ENCODE measurements at regions of chr2 and their contacts with region 1.

Region 1: DNA sequence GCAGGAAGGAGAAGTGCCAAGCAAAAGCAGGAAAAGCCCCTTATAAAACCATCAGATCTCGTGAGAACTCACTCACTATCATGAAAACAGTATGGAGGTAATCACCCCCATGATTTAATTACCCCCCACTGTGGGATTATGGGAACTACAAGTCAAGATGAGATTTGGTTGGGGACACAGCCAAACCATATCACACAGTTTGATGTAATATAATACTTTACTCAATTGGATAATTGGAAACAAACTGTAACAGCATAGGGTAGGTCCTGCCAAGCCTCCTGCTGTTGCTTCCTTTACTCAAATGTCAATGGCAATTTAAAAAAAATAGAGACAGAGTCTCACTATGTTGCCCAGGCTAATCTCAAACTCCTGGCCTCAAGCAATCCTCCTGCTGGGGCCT is 15.5 kb upstream of the METTL21A start:
- DNase-seq: no peak
- ATAC-seq: no peak
- H3K4me3 ChIP-seq: no peak overlapping the region
- H3K27ac ChIP-seq: no peak overlapping the region
- H3K4me1 ChIP-seq: no peaks in the 10 kb centered on the region
- H3K27me3 ChIP-seq: peaks cover 3% of the 10 kb centered on the region; the same call in 1 of the 2 replicates
- CTCF ChIP-seq: no peak
- POLR2A ChIP-seq: no peak
- RAD21 ChIP-seq: no peak

Region 2: DNA sequence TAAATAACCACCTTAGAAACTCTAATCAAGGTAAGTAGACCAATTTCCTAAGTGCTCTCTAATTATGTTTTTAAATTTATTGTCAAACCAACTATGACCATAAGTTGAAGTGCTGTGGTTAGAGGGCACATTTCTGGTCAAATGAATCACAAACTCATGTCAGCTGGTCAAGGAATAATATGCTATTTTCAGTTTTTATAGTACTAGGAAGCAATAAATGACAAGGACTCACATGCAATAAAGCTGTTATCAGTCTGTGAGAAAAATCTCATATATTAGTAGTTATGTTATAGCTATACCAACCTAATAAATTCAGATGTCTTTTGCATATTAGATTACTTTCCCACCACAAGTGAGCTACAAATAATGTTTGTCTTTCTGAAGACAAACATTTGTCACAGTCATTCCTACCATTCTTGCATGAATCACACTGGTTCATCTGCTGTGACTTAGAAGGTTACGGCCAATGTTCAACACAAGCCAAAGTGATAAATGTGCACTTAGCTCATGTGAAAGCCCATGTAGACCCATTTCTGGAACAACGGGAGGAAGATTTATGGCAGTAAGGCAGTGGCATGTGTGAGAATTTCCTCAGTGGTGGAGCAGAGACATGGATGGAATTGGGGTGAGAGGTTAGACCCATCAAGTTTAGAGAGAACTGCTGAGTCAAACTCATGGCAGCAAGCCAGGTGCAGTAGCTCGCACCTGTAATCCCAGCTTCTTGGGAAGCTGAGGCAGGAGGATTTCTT is 43.4 kb after region 1 on chr2:
- CTCF ChIA-PET with region 1: no interaction called
- POLR2A ChIA-PET with region 1: no interaction called
- dilution Hi-C with region 1: no loop called
- in situ Hi-C with region 1: no loop called
- intact Hi-C with region 1: loop called (anchors 5 kb)
- DNase-seq: peak; percentile 73
- ATAC-seq: peak; percentile 82
- H3K4me3 ChIP-seq: no peak overlapping the region
- H3K27ac ChIP-seq: no peak overlapping the region
- H3K4me1 ChIP-seq: peaks cover 6% of the 10 kb centered on the region
- H3K27me3 ChIP-seq: no peaks in the 10 kb centered on the region
- CTCF ChIP-seq: no peak
- POLR2A ChIP-seq: no peak
- RAD21 ChIP-seq: no peak